ENCODE measurements at regions of chr18 and their contacts with region 1.

Region 1: GRCh38 chr18:10851824-10852319 is 297.5 kb downstream of the PIEZO2 start:
- DNase-seq: peak in 1 of 2 donors; percentile 84
- H3K4me3 ChIP-seq: no peak overlapping the region
- H3K27ac ChIP-seq: no peak overlapping the region
- H3K4me1 ChIP-seq: peaks cover 0 to 10% (median 3%) of the 10 kb centered on the region in 4 donors
- H3K27me3 ChIP-seq: peaks cover 0 to 8% (median 0%) of the 10 kb centered on the region in 3 donors
- CTCF ChIP-seq: peak in 5 of 7 experiments; percentile 31 to 69 (median 54)
- EP300 ChIP-seq: no peak
- POLR2A ChIP-seq: no peak

Region 2: GRCh38 chr18:10787293-10787901 is 64.5 kb before region 1 on chr18:
- intact Hi-C with region 1: no loop called
- DNase-seq: peak; percentile 77 to 91
- H3K4me3 ChIP-seq: no peak overlapping the region
- H3K27ac ChIP-seq: no peak overlapping the region
- H3K4me1 ChIP-seq: peaks cover 0 to 5% (median 0%) of the 10 kb centered on the region in 4 donors
- H3K27me3 ChIP-seq: no peaks in the 10 kb centered on the region
- CTCF ChIP-seq: peak in 4 of 7 experiments; percentile 17 to 64 (median 45)
- EP300 ChIP-seq: no peak
- POLR2A ChIP-seq: no peak

Region 3: DNA sequence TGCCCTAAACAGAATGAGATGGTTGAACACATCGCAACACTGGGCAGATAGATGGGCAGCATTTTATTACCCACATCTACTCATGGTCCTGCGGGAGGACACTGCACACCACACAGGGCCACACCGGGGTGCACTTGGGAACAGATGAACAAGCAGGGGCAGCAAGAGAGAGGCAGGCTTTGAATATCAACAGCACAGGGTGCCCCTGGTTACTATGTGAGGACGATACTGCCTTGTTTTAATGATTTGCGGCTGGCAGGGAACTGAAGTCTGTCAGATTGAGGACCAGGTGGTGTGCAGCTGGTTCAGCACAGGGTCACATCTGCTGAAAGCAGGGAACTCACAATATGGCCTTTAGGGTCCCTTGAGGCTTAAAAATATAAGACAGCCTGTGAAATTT is 101.8 kb after region 1 on chr18:
- intact Hi-C with region 1: no loop called
- DNase-seq: peak in 1 of 2 donors; percentile 25
- H3K4me3 ChIP-seq: no peak overlapping the region
- H3K27ac ChIP-seq: no peak overlapping the region
- H3K4me1 ChIP-seq: no peaks in the 10 kb centered on the region
- H3K27me3 ChIP-seq: no peaks in the 10 kb centered on the region
- CTCF ChIP-seq: no peak
- EP300 ChIP-seq: no peak
- POLR2A ChIP-seq: no peak

Region 4: GRCh38 chr18:11040823-11041656 is 189.2 kb after region 1 on chr18:
- intact Hi-C with region 1: loop called (anchors 5 kb)
- DNase-seq: peak in 1 of 2 donors; percentile 80
- H3K4me3 ChIP-seq: no peak overlapping the region
- H3K27ac ChIP-seq: no peak overlapping the region
- H3K4me1 ChIP-seq: no peaks in the 10 kb centered on the region
- H3K27me3 ChIP-seq: peaks cover 0 to 4% (median 0%) of the 10 kb centered on the region in 3 donors
- CTCF ChIP-seq: peak in 5 of 7 experiments; percentile 42 to 68 (median 47)
- EP300 ChIP-seq: no peak
- POLR2A ChIP-seq: no peak

Region 5: GRCh38 chr18:11149441-11150270 is 297.8 kb after region 1 on chr18 and contains the start of gene PIEZO2:
- intact Hi-C with region 1: loop called (anchors 5 kb)
- DNase-seq: peak; percentile 29 to 93
- H3K4me3 ChIP-seq: peak within 1 kb of the TSS; percentile 36 to 58 (median 42)
- H3K27ac ChIP-seq: peak within 1 kb of the TSS in 1 of 5 donors; percentile 24
- H3K4me1 ChIP-seq: peaks cover 0 to 28% (median 20%) of the 10 kb centered on the region in 4 donors
- H3K27me3 ChIP-seq: peaks cover 6 to 80% (median 46%) of the 10 kb centered on the region in 3 donors
- CTCF ChIP-seq: no peak
- EP300 ChIP-seq: no peak
- POLR2A ChIP-seq: no peak
- total RNA-seq, gene PIEZO2: 0.89 to 45.3 (median 6.1) TPM